HepG2 (cell line): ENCODE measurements at regions of chr3 and their contacts with region 1.

Region 1: GRCh38 chr3:179015551-179016020 is 56.0 kb downstream of the ZMAT3 start:
- DNase-seq: peak; percentile 81
- ATAC-seq: peak; percentile 95
- H3K4me3 ChIP-seq: no peak overlapping the region
- H3K27ac ChIP-seq: no peak overlapping the region
- H3K4me1 ChIP-seq: peaks cover 6% of the 10 kb centered on the region; the same call in 1 of the 2 replicates
- H3K27me3 ChIP-seq: no peaks in the 10 kb centered on the region
- CTCF ChIP-seq: peak; percentile 87
- EP300 ChIP-seq: no peak
- POLR2A ChIP-seq: no peak
- RAD21 ChIP-seq: peak; percentile 66; the same call in 1 of the 2 replicates

Region 2: DNA sequence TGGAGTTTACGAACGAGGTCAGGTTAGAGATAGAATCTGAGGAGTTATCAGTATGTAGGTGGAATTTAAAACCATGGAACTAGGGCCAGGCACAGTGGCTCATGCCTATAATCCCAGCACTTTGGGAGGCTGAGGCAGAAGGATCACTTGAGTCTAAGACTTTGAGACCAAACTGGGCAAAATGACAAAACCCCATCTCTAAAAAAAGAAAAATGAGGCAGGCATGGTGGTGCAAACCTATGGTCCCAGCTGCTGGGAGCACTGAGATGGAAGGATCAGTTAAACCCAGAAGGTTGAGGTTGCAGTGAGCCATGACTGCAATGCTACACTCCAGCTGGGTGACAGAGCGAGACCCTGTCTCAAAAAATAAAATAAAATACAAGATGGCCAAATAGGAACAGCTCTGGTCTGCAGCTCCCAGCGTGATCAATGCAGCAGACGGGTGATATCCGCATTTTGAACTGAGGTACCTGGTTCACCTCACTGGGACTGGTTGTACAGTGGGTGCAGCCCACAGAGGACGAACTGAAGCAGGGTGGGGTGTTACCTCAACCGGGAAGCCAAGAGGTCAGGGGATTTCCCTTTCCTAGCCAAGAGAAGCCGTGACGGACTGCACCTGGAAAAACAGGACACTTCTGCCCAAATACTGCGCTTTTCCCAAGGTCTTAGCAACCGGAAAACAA is 22.8 kb after region 1 on chr3:
- CTCF ChIA-PET with region 1: no interaction called
- POLR2A ChIA-PET with region 1: no interaction called
- in situ Hi-C with region 1: no loop called
- intact Hi-C with region 1: loop called (anchors 2 kb)
- DNase-seq: no peak
- ATAC-seq: peak; percentile 82
- H3K4me3 ChIP-seq: no peak overlapping the region
- H3K27ac ChIP-seq: peak overlapping the region; percentile 68
- H3K4me1 ChIP-seq: peaks cover 25% of the 10 kb centered on the region
- H3K27me3 ChIP-seq: no peaks in the 10 kb centered on the region
- CTCF ChIP-seq: no peak
- EP300 ChIP-seq: no peak
- POLR2A ChIP-seq: no peak
- RAD21 ChIP-seq: no peak

Region 3: GRCh38 chr3:179045719-179046402 is 30.3 kb after region 1 on chr3:
- CTCF ChIA-PET with region 1: no interaction called
- POLR2A ChIA-PET with region 1: no interaction called
- in situ Hi-C with region 1: no loop called
- intact Hi-C with region 1: loop called (anchors 1 kb)
- DNase-seq: no peak
- ATAC-seq: peak; percentile 52
- H3K4me3 ChIP-seq: no peak overlapping the region
- H3K27ac ChIP-seq: no peak overlapping the region
- H3K4me1 ChIP-seq: peaks cover 9% of the 10 kb centered on the region; the same call in 1 of the 2 replicates
- H3K27me3 ChIP-seq: no peaks in the 10 kb centered on the region
- CTCF ChIP-seq: no peak
- EP300 ChIP-seq: no peak
- POLR2A ChIP-seq: no peak
- RAD21 ChIP-seq: no peak

Region 4: DNA sequence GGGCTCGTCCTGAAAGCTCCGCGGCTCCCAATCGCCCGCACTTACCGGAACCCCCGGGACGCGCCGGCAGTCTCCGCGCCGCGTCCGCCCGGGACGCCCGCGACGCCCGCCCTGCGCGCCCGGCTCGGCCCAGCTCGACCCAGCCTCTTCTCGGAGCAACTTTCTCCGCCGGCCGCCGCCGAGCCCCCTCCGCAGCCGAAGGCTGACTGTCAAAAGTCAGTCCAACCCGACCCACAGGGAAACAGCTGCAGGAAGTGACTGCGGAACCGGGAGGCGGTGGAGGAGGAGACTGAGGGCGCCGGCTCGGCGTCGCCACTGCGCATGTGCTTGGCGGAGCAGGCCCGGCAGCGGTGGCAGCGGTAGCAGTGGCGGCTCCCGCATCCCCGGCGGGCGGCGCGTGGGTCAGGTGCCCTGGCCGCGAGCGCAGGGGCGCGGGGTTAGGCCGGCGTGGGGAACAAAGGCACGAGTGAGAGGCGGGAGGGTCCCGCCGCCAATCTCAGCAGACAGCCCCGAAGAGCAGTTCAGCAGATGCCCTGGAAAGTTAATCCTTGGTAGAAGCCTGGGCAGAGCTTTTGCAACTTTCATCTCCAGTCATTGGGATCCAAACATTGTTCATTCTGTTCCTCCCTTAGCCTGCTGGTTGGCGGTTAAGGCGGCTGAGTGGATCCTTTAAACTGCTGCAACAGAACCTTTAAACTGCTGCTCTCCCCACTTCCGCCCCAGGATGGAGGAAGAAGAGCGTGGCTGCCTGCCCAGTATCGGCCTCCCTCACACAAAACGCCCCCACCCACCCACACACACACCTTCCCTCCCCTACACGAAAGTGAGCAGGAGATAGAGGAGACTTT is 56.2 kb after region 1 on chr3 and contains the start of gene ZMAT3:
- CTCF ChIA-PET with region 1: no interaction called
- POLR2A ChIA-PET with region 1: no interaction called
- in situ Hi-C with region 1: no loop called
- intact Hi-C with region 1: loop called (anchors 2 kb)
- DNase-seq: peak; percentile 71
- ATAC-seq: peak; percentile 96
- H3K4me3 ChIP-seq: peak within 1 kb of the TSS; percentile 82 to 91 (median 87)
- H3K27ac ChIP-seq: peak within 1 kb of the TSS; percentile 67
- H3K4me1 ChIP-seq: peaks cover 35% of the 10 kb centered on the region
- H3K27me3 ChIP-seq: peaks cover 0 to 8% of the 10 kb centered on the region in 2 experiments; a peak in 3 of 5 replicates
- CTCF ChIP-seq: no peak
- EP300 ChIP-seq: no peak
- POLR2A ChIP-seq: peak; percentile 56 to 91; a peak in 3 of 4 replicates
- RAD21 ChIP-seq: no peak
- total RNA-seq, gene ZMAT3: 11.4 and 19.4 TPM in 2 replicates

Region 5: GRCh38 chr3:179098388-179099077 is 82.9 kb after region 1 on chr3:
- CTCF ChIA-PET with region 1: no interaction called
- POLR2A ChIA-PET with region 1: no interaction called
- in situ Hi-C with region 1: no loop called
- intact Hi-C with region 1: loop called (anchors 5 kb)
- DNase-seq: no peak
- ATAC-seq: no peak
- H3K4me3 ChIP-seq: no peak overlapping the region
- H3K27ac ChIP-seq: no peak overlapping the region
- H3K4me1 ChIP-seq: no peaks in the 10 kb centered on the region
- H3K27me3 ChIP-seq: peaks cover 0 to 2% of the 10 kb centered on the region in 2 experiments; a peak in 1 of 5 replicates
- CTCF ChIP-seq: no peak
- EP300 ChIP-seq: no peak
- POLR2A ChIP-seq: no peak
- RAD21 ChIP-seq: no peak

Region 6: GRCh38 chr3:179147873-179148615 is 132.5 kb after region 1 on chr3 and contains the start of gene PIK3CA:
- CTCF ChIA-PET with region 1: interaction called, 3 read pairs
- POLR2A ChIA-PET with region 1: no interaction called
- in situ Hi-C with region 1: no loop called
- intact Hi-C with region 1: loop called (anchors 1 kb)
- DNase-seq: peak; percentile 97
- ATAC-seq: peak; percentile 91
- H3K4me3 ChIP-seq: peak within 1 kb of the TSS; percentile 92 to 100 (median 98)
- H3K27ac ChIP-seq: peak within 1 kb of the TSS; percentile 87
- H3K4me1 ChIP-seq: peaks cover 22% of the 10 kb centered on the region
- H3K27me3 ChIP-seq: no peaks in the 10 kb centered on the region; a peak in 1 of 5 replicates
- CTCF ChIP-seq: no peak
- EP300 ChIP-seq: peak in 1 of 2 experiments; percentile 21; a peak in 1 of 4 replicates
- POLR2A ChIP-seq: peak; percentile 27 to 49; a peak in 2 of 4 replicates
- RAD21 ChIP-seq: peak; percentile 22; the same call in 1 of the 2 replicates
- total RNA-seq, gene PIK3CA: 11.4 and 20.4 TPM in 2 replicates

Region 7: GRCh38 chr3:179562591-179563270 is 547.1 kb after region 1 on chr3 and contains the start of gene ACTL6A:
- CTCF ChIA-PET with region 1: interaction called, 6 read pairs
- POLR2A ChIA-PET with region 1: no interaction called
- in situ Hi-C with region 1: no loop called
- intact Hi-C with region 1: loop called (anchors 2 kb)
- DNase-seq: peak; percentile 98
- ATAC-seq: peak; percentile 97
- H3K4me3 ChIP-seq: peak within 1 kb of the TSS; percentile 87 to 97 (median 91)
- H3K27ac ChIP-seq: peak within 1 kb of the TSS; percentile 94
- H3K4me1 ChIP-seq: peaks cover 23% of the 10 kb centered on the region
- H3K27me3 ChIP-seq: no peaks in the 10 kb centered on the region
- CTCF ChIP-seq: no peak
- EP300 ChIP-seq: no peak
- POLR2A ChIP-seq: peak; percentile 89
- RAD21 ChIP-seq: 0 out of 2 replicates have a peak, but pooled peaks have one; percentile 16
- total RNA-seq, gene ACTL6A: 84.1 and 116 TPM in 2 replicates